Colonic mucosa (tissue), 4 donors: ENCODE measurements at regions of chr7 and their contacts with region 1.

Region 1: DNA sequence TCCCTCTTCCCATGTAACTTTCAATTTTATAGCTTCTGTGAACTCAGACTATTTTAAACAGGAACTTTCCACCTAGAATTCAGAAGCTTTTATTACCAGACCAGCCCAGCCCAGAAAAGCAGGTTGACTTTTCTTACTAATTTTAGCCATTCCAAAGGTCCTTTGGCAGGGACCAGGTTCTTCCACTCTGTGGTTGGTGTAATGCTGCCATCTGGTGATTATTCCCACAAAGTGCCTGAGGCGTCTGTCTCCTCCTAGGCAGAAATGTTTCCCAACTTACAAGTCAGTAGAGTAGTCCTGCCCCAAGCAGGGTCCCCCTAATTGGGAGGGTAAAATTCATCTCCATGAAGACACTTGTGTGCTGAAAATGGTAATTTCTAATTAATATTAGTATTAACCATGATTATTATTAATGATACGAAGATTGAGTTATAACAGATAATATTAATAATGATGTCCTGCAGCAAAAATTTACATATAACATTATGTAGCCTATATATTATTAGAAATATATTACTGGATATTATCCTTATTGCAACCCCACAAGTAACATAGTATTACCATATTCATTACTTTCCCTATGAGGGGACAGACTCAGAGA is 53.0 kb upstream of the PPP1R17 start:
- DNase-seq: peak; percentile 70
- H3K4me3 ChIP-seq: no peak overlapping the region
- H3K27ac ChIP-seq: no peak overlapping the region
- H3K4me1 ChIP-seq: no peaks in the 10 kb centered on the region
- H3K27me3 ChIP-seq: no peaks in the 10 kb centered on the region
- CTCF ChIP-seq: peak; percentile 61

Region 2: GRCh38 chr7:31134246-31135188 is 499.5 kb before region 1 on chr7:
- intact Hi-C with region 1: loop called (anchors 2 kb)
- DNase-seq: peak; percentile 69
- H3K4me3 ChIP-seq: no peak overlapping the region
- H3K27ac ChIP-seq: no peak overlapping the region
- H3K4me1 ChIP-seq: no peaks in the 10 kb centered on the region
- H3K27me3 ChIP-seq: no peaks in the 10 kb centered on the region
- CTCF ChIP-seq: peak; percentile 57

Region 3: DNA sequence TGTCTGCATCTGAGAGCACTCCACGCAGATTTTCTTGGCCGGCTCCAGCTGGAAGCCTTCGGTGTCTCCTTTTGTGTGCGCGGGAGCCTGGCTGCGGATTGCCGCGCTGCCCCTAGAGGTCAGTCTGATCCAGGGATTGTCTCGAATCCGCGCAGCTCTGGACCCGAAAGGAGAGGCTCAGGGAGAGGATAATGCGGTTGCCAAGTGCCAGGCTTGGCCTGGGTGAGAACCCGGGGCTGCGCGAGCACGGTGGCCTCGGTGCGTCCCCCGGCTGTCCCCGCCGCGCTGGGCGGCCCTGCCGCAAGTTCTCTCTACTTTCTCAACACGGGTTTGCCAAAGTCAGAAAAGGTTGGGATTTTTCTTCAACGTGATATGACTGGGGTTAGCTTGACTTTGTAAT is 441.0 kb before region 1 on chr7:
- intact Hi-C with region 1: loop called (anchors 5 kb)
- DNase-seq: peak; percentile 37
- H3K4me3 ChIP-seq: no peak overlapping the region
- H3K27ac ChIP-seq: no peak overlapping the region
- H3K4me1 ChIP-seq: no peaks in the 10 kb centered on the region
- H3K27me3 ChIP-seq: no peaks in the 10 kb centered on the region
- CTCF ChIP-seq: peak; percentile 40

Region 4: DNA sequence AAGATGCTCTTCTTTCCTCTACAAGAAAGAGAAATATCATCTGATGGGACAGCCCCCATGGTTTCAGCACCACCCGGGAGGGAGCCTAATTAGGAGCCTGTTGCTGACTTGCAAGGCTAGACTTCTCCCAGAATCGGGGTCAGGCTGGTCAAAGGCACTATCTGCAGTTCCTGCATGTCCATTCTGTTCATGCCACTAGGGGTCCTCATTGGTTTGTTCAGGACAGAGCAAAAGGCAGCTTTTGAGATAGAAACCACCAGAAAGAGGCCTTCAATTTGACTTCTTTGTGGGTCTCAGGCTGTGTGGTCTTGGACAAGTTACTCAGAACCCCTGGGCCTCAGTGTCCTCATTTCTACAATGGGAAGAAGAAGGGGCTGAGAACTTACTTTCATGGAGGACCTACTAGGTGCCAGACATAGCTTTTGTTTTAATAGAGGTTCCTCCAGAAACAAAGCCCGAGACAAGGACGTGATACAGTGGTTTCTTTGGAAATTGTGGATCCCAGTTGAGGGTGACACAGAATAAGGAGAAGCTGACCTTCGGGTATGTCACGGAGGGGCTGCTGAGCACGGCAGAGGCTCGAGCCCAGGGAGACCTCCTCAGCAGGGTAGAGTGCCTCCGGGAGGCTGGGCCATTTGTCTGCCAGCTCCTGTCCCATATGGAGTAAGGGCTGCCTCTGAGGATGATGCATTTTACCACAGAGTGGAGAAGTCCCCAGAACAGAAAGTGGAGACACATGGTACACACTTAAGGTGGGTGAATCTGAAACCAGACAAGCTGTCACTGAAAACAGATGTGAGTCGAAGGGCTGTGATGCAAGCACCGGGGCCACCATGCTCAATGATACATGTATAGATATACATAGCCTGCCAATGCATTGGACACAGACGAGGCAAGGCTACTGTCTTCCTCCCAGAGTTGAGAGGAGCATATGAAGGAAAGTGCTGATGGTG is 260.4 kb before region 1 on chr7:
- intact Hi-C with region 1: loop called (anchors 5 kb)
- DNase-seq: peak; percentile 58
- H3K4me3 ChIP-seq: no peak overlapping the region
- H3K27ac ChIP-seq: no peak overlapping the region
- H3K4me1 ChIP-seq: no peaks in the 10 kb centered on the region
- H3K27me3 ChIP-seq: no peaks in the 10 kb centered on the region
- CTCF ChIP-seq: peak; percentile 54

Region 5: GRCh38 chr7:31443457-31443856 is 190.5 kb before region 1 on chr7:
- intact Hi-C with region 1: loop called (anchors 5 kb)
- DNase-seq: no peak
- H3K4me3 ChIP-seq: no peak overlapping the region
- H3K27ac ChIP-seq: no peak overlapping the region
- H3K4me1 ChIP-seq: no peaks in the 10 kb centered on the region
- H3K27me3 ChIP-seq: no peaks in the 10 kb centered on the region
- CTCF ChIP-seq: peak; percentile 76

Region 6: GRCh38 chr7:31796375-31796774 is 162.4 kb after region 1 on chr7:
- intact Hi-C with region 1: no loop called
- DNase-seq: no peak
- H3K4me3 ChIP-seq: no peak overlapping the region
- H3K27ac ChIP-seq: no peak overlapping the region
- H3K4me1 ChIP-seq: no peaks in the 10 kb centered on the region
- H3K27me3 ChIP-seq: no peaks in the 10 kb centered on the region
- CTCF ChIP-seq: no peak